ENCODE measurements at regions of chr12 and their contacts with region 1.

Region 1: DNA sequence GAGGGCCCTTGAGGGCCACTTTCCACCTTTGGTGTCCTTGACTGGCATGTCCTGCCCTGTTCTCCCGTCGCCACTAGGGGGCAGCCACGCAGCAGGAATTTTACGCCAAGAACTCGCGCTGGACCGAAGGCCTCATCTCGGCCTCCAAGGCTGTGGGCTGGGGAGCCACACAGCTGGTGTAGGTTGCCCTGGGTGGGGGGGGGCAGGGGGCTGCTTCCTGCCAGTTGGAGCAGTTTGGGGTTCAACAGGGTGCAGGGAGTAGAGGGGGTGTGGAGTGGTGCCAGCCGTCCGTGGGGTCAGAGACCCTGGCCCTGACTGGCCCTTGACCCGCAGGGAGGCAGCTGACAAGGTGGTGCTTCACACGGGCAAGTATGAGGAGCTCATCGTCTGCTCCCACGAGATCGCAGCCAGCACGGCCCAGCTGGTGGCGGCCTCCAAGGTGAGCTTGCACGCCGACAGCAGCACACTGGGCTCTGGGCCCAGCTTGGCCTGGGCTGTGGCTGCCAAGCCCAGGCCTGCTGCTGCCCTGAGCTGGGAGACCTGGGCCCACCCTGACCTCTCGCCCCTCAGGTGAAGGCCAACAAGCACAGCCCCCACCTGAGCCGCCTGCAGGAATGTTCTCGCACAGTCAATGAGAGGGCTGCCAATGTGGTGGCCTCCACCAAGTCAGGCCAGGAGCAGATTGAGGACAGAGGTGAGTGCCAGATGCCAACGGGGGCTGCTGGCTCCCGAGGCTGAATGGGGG is 25.3 kb downstream of the HIP1R start:
- DNase-seq: peak; percentile 86

Region 2: GRCh38 chr12:122951406-122951805 is 90.9 kb after region 1 on chr12:
- CTCF ChIA-PET with region 1: interaction called, 16 read pairs
- POLR2A ChIA-PET with region 1: no interaction called
- DNase-seq: no peak

Region 3: DNA sequence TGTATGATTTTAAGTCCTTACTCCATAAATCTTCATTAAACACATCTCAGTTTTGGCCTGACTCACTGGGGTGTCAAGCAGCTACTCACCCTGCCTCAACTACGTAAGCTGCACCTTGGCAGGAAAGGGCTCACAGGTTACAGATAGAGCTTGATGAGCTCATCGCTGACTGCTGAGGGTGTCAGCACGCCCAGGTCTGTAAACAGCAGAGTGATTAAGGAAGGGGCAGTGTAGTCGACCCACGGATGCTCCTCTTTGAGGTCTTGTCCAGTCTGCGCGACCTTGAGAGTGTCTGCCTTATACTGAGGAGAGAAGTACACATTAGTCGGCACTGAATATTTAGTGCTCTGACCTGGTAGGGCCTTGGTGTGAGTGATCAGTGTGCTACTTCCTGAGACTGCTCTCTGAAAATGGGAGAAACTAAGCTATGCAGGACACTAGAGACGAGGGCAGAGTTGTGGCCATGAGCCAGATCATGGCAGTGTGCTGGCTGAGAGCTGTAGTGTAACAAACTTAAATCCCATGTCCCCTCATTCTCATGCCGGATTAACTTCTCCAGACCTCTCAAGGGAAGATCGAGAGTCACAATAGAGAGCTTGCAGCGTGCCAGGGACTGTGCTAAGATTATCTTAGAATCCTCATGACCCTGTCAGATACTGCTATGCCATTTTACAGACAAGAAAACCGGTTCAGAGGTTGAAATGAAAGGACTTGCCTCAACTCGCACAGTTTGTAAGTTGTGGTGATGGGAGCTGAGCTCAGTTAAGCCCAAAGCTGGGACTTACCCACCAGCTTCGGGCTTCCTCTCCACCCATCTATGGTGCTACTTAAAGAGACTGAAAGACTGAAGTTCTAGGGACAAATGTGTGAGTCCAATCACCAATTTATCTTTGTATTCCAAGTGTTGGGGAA is 761.4 kb after region 1 on chr12:
- CTCF ChIA-PET with region 1: no interaction called
- POLR2A ChIA-PET with region 1: no interaction called
- DNase-seq: no peak

Measured in HEK293T (cell line).